Right cardiac atrium (tissue), 5 donors: ENCODE measurements at regions of chr9 and their contacts with region 1.

Region 1: DNA sequence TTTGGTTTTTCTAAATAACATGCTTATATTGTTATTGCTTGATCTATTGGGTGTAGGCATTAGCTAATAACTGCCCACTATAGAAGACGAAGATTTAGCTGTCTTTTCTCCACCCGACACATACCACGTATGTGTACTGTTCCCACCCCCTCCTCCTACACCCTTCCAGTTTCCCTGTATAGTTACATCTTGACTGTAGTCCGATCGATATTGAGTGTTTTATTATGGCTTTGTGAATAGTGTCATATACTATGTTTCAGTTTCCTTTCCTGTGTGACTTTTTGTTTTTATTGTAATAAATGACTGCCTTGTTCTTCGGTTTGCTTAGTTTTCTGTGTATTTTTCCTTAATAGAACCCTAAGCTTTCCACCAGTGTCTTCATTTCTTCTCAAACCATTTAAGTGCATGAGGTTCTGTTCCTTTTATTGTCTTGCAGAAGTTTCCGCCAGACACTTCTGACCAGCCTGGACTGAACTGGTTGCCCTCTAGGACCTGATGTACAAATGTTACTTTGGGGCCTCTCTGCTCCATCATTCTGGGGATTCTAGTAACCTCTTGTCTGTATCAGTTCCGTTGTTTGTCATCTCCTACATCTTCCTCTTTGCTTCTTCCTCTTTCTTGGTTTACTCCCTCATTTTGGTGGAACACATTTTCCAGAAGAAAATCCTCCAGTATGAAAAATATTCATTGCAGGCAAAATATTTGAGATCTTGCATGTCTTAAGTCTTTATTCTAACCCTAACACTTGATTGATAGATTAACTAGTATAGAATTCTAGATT is 61.8 kb downstream of the PRKACG start:
- DNase-seq: no peak
- ATAC-seq: peak; percentile 39 to 40
- H3K4me3 ChIP-seq: no peak overlapping the region
- H3K27ac ChIP-seq: no peak overlapping the region
- H3K4me1 ChIP-seq: no peaks in the 10 kb centered on the region
- H3K27me3 ChIP-seq: no peaks in the 10 kb centered on the region

Region 2: GRCh38 chr9:68817079-68817875 is 134.8 kb before region 1 on chr9:
- intact Hi-C with region 1: no loop called
- DNase-seq: no peak
- ATAC-seq: peak in 1 of 2 donors; percentile 40
- H3K4me3 ChIP-seq: no peak overlapping the region
- H3K27ac ChIP-seq: no peak overlapping the region
- H3K4me1 ChIP-seq: no peaks in the 10 kb centered on the region
- H3K27me3 ChIP-seq: no peaks in the 10 kb centered on the region

Region 3: GRCh38 chr9:68844631-68845612 is 107.1 kb before region 1 on chr9:
- intact Hi-C with region 1: loop called in 1 of 4 experiments (anchors 10 kb)
- DNase-seq: peak; percentile 64 to 84 (median 72)
- ATAC-seq: peak; percentile 67 to 74
- H3K4me3 ChIP-seq: no peak overlapping the region
- H3K27ac ChIP-seq: no peak overlapping the region
- H3K4me1 ChIP-seq: peaks cover 7% of the 10 kb centered on the region
- H3K27me3 ChIP-seq: no peaks in the 10 kb centered on the region

Region 4: GRCh38 chr9:69121828-69122548 is 169.9 kb after region 1 on chr9:
- intact Hi-C with region 1: no loop called
- DNase-seq: peak; percentile 71 to 89 (median 87)
- ATAC-seq: peak; percentile 83 to 94
- H3K4me3 ChIP-seq: peak overlapping the region; percentile 83
- H3K27ac ChIP-seq: peak overlapping the region; percentile 57
- H3K4me1 ChIP-seq: no peaks in the 10 kb centered on the region
- H3K27me3 ChIP-seq: no peaks in the 10 kb centered on the region